Stomach (tissue), 19 donors: ENCODE measurements at regions of chr6 and their contacts with region 1.

Region 1: DNA sequence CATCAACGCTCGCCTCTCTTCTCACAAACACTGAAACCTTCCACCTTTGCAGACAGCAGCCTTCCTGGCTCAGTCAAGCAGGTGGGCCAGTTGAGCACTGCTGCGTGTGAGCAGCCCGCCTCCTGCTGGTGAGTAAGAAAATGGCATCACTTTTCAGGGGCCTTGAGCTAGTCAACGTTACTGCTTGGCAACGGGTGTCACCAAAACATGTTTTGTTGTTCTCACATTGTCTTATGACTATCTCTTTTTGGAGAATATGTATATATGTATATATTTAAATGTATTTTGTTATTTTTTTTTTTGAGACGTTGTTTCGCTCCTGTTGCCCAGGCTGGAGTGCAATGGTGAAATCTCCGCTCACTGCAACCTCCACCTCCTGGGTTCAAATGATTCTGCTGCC is 97.0 kb upstream of the AGPAT4 start:
- DNase-seq: peak; percentile 65 to 88
- H3K4me3 ChIP-seq: no peak overlapping the region
- H3K27ac ChIP-seq: no peak overlapping the region
- H3K4me1 ChIP-seq: peaks cover under 1 to 18% (median 17%) of the 10 kb centered on the region in 4 donors
- H3K27me3 ChIP-seq: no peaks in the 10 kb centered on the region
- CTCF ChIP-seq: peak in 5 of 7 experiments; percentile 63 to 88 (median 86)
- EP300 ChIP-seq: no peak
- POLR2A ChIP-seq: no peak

Region 2: GRCh38 chr6:160733050-160733646 is 637.7 kb before region 1 on chr6:
- intact Hi-C with region 1: loop called (anchors 10 kb)
- DNase-seq: peak; percentile 28 to 77
- H3K4me3 ChIP-seq: no peak overlapping the region
- H3K27ac ChIP-seq: no peak overlapping the region
- H3K4me1 ChIP-seq: peaks cover 0 to 4% (median 0%) of the 10 kb centered on the region in 4 donors
- H3K27me3 ChIP-seq: peaks cover 0 to 14% (median 0%) of the 10 kb centered on the region in 3 donors
- CTCF ChIP-seq: peak in 5 of 7 experiments; percentile 28 to 62 (median 49)
- EP300 ChIP-seq: no peak
- POLR2A ChIP-seq: no peak

Region 3: GRCh38 chr6:160818934-160819333 is 551.9 kb before region 1 on chr6:
- intact Hi-C with region 1: no loop called
- DNase-seq: no peak
- H3K4me3 ChIP-seq: no peak overlapping the region
- H3K27ac ChIP-seq: no peak overlapping the region
- H3K4me1 ChIP-seq: no peaks in the 10 kb centered on the region
- H3K27me3 ChIP-seq: no peaks in the 10 kb centered on the region
- CTCF ChIP-seq: no peak
- EP300 ChIP-seq: no peak
- POLR2A ChIP-seq: no peak

Region 4: DNA sequence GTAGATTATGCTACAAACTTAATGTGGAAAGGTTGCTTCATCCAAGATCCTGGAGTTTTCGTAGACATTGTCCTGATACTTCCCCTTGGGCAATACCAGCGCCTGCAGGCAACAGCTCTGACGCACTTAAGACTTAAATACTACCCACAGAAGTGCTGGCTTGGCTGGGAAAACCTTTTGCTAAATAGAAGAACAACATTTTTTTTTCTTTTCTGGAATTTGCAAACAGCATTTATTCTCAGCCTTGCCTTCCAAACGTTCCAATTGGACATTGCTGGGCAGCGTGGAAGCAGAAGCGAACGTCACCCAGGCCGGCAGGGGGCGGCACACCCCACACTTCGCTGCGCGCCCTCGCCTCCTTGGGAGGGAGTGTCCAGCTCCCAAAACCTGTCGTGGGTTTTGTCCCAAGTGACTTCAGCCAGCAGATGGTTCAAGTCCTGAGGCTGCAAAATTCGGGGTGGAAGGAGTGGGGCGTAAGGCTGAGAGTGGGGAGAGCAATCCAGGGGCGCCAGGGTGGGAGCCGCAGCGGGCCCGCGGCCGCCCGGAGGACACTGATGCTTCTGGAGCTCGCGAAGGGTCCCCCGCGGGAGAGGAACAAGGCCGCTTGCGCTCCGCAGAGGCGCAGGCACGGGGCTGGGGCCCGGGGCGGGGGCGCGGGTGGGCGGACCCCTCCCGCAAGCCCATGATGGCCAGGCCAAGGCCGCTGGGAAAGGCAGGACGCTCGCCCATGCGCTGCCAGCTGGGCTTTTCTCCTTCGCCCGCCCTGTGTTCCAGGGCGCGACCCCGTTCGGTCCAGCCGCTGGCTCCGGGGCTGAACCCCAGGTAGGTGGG is 440.1 kb before region 1 on chr6:
- intact Hi-C with region 1: loop called (anchors 5 kb)
- DNase-seq: peak; percentile 76 to 93
- H3K4me3 ChIP-seq: peak overlapping the region; percentile 37 to 56 (median 50)
- H3K27ac ChIP-seq: peak overlapping the region in 1 of 5 donors; percentile 54
- H3K4me1 ChIP-seq: peaks cover 4 to 16% (median 12%) of the 10 kb centered on the region in 4 donors
- H3K27me3 ChIP-seq: peaks cover 0 to 16% (median 5%) of the 10 kb centered on the region in 3 donors
- CTCF ChIP-seq: peak in 5 of 7 experiments; percentile 79 to 88 (median 83)
- EP300 ChIP-seq: no peak
- POLR2A ChIP-seq: no peak

Region 5: DNA sequence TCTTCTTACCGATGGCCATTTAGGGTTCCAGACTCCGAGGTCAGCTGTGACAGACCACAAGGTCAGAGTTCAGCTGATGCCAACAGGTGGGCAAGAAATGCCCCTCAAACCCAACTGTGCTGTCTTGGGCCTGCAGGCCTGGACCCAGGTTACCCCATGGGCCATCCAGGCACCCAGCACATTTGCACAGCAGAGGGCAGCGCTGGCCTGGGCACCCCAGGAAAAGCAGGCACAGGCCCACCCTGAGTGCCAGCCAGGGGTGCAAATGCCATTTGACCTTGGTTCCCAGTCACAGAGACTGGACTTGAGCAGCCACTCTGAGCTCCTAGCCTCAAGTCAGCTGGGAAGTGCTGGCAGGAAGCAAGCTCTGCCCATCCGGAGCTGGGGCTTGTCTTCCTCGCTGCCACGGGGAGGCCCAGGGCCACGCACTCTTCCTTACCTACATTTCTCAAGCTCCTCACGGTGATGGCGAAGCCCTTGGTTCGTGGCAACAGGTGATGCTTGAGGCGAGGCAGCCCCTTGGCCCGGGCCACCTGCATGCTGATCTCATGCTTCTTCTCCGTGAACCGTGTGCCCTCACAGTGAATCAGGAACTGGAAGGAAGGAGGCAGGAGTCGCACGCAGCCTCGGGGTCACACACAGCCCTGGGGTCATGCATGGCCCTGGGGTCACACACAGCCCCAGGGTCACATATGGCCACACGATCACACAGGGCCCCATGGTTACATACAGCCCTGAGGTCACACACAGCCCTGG is 217.8 kb before region 1 on chr6:
- intact Hi-C with region 1: loop called (anchors 5 kb)
- DNase-seq: no peak
- H3K4me3 ChIP-seq: no peak overlapping the region
- H3K27ac ChIP-seq: no peak overlapping the region
- H3K4me1 ChIP-seq: no peaks in the 10 kb centered on the region
- H3K27me3 ChIP-seq: no peaks in the 10 kb centered on the region
- CTCF ChIP-seq: peak in 2 of 7 experiments; percentile 23 to 29
- EP300 ChIP-seq: no peak
- POLR2A ChIP-seq: no peak

Region 6: GRCh38 chr6:161284653-161285052 is 86.2 kb before region 1 on chr6:
- intact Hi-C with region 1: no loop called
- DNase-seq: no peak
- H3K4me3 ChIP-seq: no peak overlapping the region
- H3K27ac ChIP-seq: no peak overlapping the region
- H3K4me1 ChIP-seq: no peaks in the 10 kb centered on the region
- H3K27me3 ChIP-seq: no peaks in the 10 kb centered on the region
- CTCF ChIP-seq: no peak
- EP300 ChIP-seq: no peak
- POLR2A ChIP-seq: no peak

Region 7: GRCh38 chr6:161333410-161333809 is 37.5 kb before region 1 on chr6:
- intact Hi-C with region 1: no loop called
- DNase-seq: no peak
- H3K4me3 ChIP-seq: no peak overlapping the region
- H3K27ac ChIP-seq: no peak overlapping the region
- H3K4me1 ChIP-seq: no peaks in the 10 kb centered on the region
- H3K27me3 ChIP-seq: no peaks in the 10 kb centered on the region
- CTCF ChIP-seq: no peak
- EP300 ChIP-seq: no peak
- POLR2A ChIP-seq: no peak